Activated T-helper 1 cell treated with anti-CD3 and anti-CD28 coated beads, Interleukin-12 subunit alpha, Interleukin-12 subunit beta, Interleukin-2, Interleukin-4 antibody, amounts not matched to agents 30 ng/mL and 10 ng/mL and 1 ng/mL, durations not matched to agents 14 hours and 24 hours and 36 hours (primary cell): ENCODE measurements at regions of chrX and their contacts with region 1.

Region 1: GRCh38 chrX:112678831-112679230 is 907 bp downstream of the LHFPL1 start:
- DNase-seq: no peak
- H3K4me3 Mint-ChIP-seq: peak overlapping the region; percentile 56
- H3K27ac Mint-ChIP-seq: peak overlapping the region; percentile 70
- H3K4me1 Mint-ChIP-seq: peaks cover 32% of the 10 kb centered on the region
- H3K27me3 Mint-ChIP-seq: peaks cover 2% of the 10 kb centered on the region

Region 2: GRCh38 chrX:112645774-112646173 is 33.1 kb before region 1 on chrX:
- intact Hi-C with region 1: loop called (anchors 2 kb)
- DNase-seq: no peak
- H3K4me3 Mint-ChIP-seq: no peak overlapping the region
- H3K27ac Mint-ChIP-seq: peak overlapping the region; percentile 82
- H3K4me1 Mint-ChIP-seq: peaks cover 10% of the 10 kb centered on the region
- H3K27me3 Mint-ChIP-seq: no peaks in the 10 kb centered on the region

Region 3: GRCh38 chrX:112731793-112732575 is 53.2 kb after region 1 on chrX:
- intact Hi-C with region 1: loop called (anchors 5 kb)
- DNase-seq: no peak
- H3K4me3 Mint-ChIP-seq: no peak overlapping the region
- H3K27ac Mint-ChIP-seq: no peak overlapping the region
- H3K4me1 Mint-ChIP-seq: no peaks in the 10 kb centered on the region
- H3K27me3 Mint-ChIP-seq: peaks cover 7% of the 10 kb centered on the region